ENCODE measurements at regions of chr11 and their contacts with region 1.

Region 1: GRCh38 chr11:77187776-77188632 is 60.0 kb downstream of the MYO7A start:
- DNase-seq: peak; percentile 65
- ATAC-seq: peak; percentile 82
- H3K4me3 ChIP-seq: no peak overlapping the region
- H3K27ac ChIP-seq: no peak overlapping the region
- H3K4me1 ChIP-seq: no peaks in the 10 kb centered on the region
- H3K27me3 ChIP-seq: no peaks in the 10 kb centered on the region
- CTCF ChIP-seq: peak; percentile 98

Region 2: GRCh38 chr11:77127232-77127911 is 60.6 kb before region 1 on chr11:
- CTCF ChIA-PET with region 1: interaction called, 33 read pairs
- POLR2A ChIA-PET with region 1: no interaction called
- in situ Hi-C with region 1: no loop called
- intact Hi-C with region 1: loop called (anchors 1 kb)
- DNase-seq: no peak
- ATAC-seq: peak; percentile 82
- H3K4me3 ChIP-seq: peak overlapping the region; percentile 41 to 60
- H3K27ac ChIP-seq: no peak overlapping the region
- H3K4me1 ChIP-seq: peaks cover 7% of the 10 kb centered on the region; the same call in 1 of the 2 replicates
- H3K27me3 ChIP-seq: no peaks in the 10 kb centered on the region
- CTCF ChIP-seq: peak; percentile 100

Region 3: DNA sequence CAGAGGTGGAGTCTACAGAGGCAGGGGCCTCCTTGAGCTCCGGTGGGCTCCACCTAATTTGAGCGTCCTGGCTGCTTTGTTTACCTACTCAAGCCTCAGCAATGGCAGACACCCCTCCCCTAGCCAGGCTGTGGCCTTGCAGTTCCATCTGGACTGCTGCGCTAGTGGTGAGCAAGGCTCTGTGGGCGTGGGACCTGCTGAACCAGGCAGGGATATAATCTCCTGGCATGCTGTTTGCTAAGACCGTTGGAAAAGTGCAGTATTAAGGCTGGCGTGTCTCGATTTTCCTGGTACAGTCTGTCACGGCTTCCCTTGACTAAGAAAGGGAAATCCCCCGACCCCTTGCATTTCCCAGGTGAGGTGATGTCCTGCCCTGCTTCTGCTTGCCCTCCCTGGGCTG is 35.8 kb after region 1 on chr11:
- CTCF ChIA-PET with region 1: no interaction called
- POLR2A ChIA-PET with region 1: no interaction called
- in situ Hi-C with region 1: no loop called
- intact Hi-C with region 1: no loop called
- DNase-seq: no peak
- ATAC-seq: no peak
- H3K4me3 ChIP-seq: no peak overlapping the region
- H3K27ac ChIP-seq: no peak overlapping the region
- H3K4me1 ChIP-seq: no peaks in the 10 kb centered on the region
- H3K27me3 ChIP-seq: peaks cover 10% of the 10 kb centered on the region; the same call in 1 of the 2 replicates
- CTCF ChIP-seq: no peak